Stomach (tissue), 19 donors: ENCODE measurements at regions of chr11 and their contacts with region 1.

Region 1: GRCh38 chr11:1693327-1694063 is 3.5 kb upstream of the KRTAP5-6 start:
- DNase-seq: peak; percentile 84 to 93
- H3K4me3 ChIP-seq: peak overlapping the region; percentile 21 to 53 (median 34)
- H3K27ac ChIP-seq: peak overlapping the region in 3 of 5 donors; percentile 30 to 66 (median 65)
- H3K4me1 ChIP-seq: peaks cover 13 to 18% (median 15%) of the 10 kb centered on the region in 4 donors
- H3K27me3 ChIP-seq: peaks cover 0 to 41% (median 5%) of the 10 kb centered on the region in 3 donors
- CTCF ChIP-seq: peak in 5 of 7 experiments; percentile 63 to 91 (median 90)
- EP300 ChIP-seq: no peak
- POLR2A ChIP-seq: no peak

Region 2: GRCh38 chr11:1832211-1832919 is 138.9 kb after region 1 on chr11:
- intact Hi-C with region 1: loop called (anchors 2 kb)
- DNase-seq: peak; percentile 68 to 83
- H3K4me3 ChIP-seq: peak overlapping the region in 2 of 4 donors; percentile 16 to 18
- H3K27ac ChIP-seq: peak overlapping the region; percentile 23 to 86 (median 83)
- H3K4me1 ChIP-seq: peaks cover 38 to 77% (median 60%) of the 10 kb centered on the region in 4 donors
- H3K27me3 ChIP-seq: peaks cover 0 to 39% (median 0%) of the 10 kb centered on the region in 3 donors
- CTCF ChIP-seq: peak in 6 of 7 experiments; percentile 83 to 99 (median 94)
- EP300 ChIP-seq: no peak
- POLR2A ChIP-seq: no peak